CD8-positive, alpha-beta T cell (primary cell): ENCODE measurements at regions of chr5 and their contacts with region 1.

Region 1: DNA sequence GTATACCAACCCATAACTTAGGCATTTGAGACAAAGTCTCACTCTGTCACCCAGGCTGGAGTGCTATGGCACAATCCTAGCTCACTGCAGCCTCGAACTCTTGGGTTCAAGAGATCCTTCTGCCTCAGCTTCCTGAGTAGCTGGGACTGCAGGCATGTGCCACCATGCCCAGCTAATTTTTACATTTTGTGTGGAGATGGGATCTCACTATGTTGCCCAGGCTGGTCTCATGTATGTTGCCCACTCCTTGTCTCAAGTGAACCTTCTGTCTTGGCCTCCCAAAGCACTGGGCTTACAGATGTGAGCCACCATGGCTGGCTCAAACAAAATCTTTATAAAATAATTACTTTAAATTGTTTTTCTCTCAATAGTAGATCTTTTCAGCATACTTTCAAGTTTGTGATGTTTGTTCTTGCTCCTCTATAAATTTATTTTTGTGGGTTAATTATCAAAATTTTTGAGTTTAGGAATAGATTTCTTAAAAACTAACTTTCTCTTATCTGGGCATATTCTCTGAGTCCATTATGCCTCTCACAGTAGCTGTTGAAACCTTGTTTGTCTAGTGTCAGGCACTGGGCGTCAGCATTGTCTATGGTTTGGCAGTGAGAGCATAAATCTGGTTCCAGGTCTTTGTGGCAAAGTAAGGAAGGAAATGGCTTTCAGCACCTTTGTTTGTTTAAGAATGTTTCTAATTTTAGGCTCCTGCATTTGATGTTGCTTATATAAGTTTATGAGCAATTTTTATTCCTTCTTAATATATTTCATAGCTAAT is 38.7 kb downstream of the NLN start:
- DNase-seq: peak; percentile 27 to 83 (median 58)
- ATAC-seq: peak; percentile 99
- H3K4me3 ChIP-seq: no peak overlapping the region
- H3K4me3 Mint-ChIP-seq: no peak overlapping the region
- H3K27ac ChIP-seq: no peak overlapping the region
- H3K27ac Mint-ChIP-seq: no peak overlapping the region
- H3K4me1 ChIP-seq: peaks cover 8% of the 10 kb centered on the region
- H3K4me1 Mint-ChIP-seq: peaks cover 3% of the 10 kb centered on the region
- H3K27me3 ChIP-seq: no peaks in the 10 kb centered on the region
- H3K27me3 Mint-ChIP-seq: no peaks in the 10 kb centered on the region
- CTCF ChIP-seq: peak; percentile 74

Region 2: DNA sequence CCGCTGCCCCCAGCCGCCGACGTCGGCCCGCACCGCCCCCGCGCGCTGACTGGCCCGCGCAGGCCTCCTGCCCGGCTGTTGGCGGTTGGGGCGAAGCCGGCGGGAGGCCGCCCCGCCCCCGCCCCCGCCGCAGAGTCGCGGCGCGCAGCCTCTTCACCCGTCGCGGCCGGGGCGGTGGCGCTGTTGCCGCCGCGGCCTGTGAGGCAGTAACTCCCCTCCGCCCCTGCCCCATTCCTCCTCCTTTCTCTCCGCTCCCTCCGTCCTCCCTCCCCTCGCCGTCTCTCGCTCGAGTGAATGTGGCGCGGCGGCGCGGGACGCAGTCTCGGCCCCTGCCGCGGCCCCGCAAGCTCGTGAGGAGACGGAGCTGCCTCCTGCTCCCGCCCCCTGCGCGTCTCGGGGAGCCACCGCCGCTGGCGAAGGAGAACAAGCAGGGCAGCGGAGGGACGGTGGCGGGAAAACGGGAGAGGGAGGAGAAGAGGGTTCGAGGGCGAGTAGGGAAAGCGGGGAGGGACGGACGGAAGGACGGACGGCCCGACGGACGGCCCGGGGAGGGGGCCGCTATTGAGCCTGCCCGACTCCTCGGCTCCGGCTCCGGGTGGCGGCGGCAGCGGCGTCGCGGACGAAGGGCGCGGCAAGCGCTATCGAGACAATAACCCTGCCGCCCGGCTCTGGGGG is 165.0 kb after region 1 on chr5:
- CTCF ChIA-PET with region 1: interaction called, 5 read pairs
- POLR2A ChIA-PET with region 1: no interaction called
- intact Hi-C with region 1: loop called in 1 of 2 experiments (anchors 1 kb)
- DNase-seq: peak in 8 of 9 experiments; percentile 57 to 94 (median 79)
- ATAC-seq: peak; percentile 67
- H3K4me3 ChIP-seq: peak overlapping the region; percentile 67 to 84
- H3K4me3 Mint-ChIP-seq: peak overlapping the region; percentile 91
- H3K27ac ChIP-seq: peak overlapping the region; percentile 84 to 93
- H3K27ac Mint-ChIP-seq: peak overlapping the region; percentile 95
- H3K4me1 ChIP-seq: peaks cover 26% of the 10 kb centered on the region
- H3K4me1 Mint-ChIP-seq: peaks cover 42% of the 10 kb centered on the region
- H3K27me3 ChIP-seq: no peaks in the 10 kb centered on the region
- H3K27me3 Mint-ChIP-seq: no peaks in the 10 kb centered on the region
- CTCF ChIP-seq: no peak

Region 3: GRCh38 chr5:66041627-66042026 is 280.9 kb after region 1 on chr5:
- CTCF ChIA-PET with region 1: interaction called, 5 read pairs
- POLR2A ChIA-PET with region 1: no interaction called
- intact Hi-C with region 1: loop called in 1 of 2 experiments (anchors 5 kb)
- DNase-seq: no peak
- ATAC-seq: no peak
- H3K4me3 ChIP-seq: no peak overlapping the region
- H3K4me3 Mint-ChIP-seq: no peak overlapping the region
- H3K27ac ChIP-seq: no peak overlapping the region
- H3K27ac Mint-ChIP-seq: no peak overlapping the region
- H3K4me1 ChIP-seq: no peaks in the 10 kb centered on the region
- H3K4me1 Mint-ChIP-seq: peaks cover 23% of the 10 kb centered on the region
- H3K27me3 ChIP-seq: no peaks in the 10 kb centered on the region
- H3K27me3 Mint-ChIP-seq: no peaks in the 10 kb centered on the region
- CTCF ChIP-seq: no peak

Region 4: DNA sequence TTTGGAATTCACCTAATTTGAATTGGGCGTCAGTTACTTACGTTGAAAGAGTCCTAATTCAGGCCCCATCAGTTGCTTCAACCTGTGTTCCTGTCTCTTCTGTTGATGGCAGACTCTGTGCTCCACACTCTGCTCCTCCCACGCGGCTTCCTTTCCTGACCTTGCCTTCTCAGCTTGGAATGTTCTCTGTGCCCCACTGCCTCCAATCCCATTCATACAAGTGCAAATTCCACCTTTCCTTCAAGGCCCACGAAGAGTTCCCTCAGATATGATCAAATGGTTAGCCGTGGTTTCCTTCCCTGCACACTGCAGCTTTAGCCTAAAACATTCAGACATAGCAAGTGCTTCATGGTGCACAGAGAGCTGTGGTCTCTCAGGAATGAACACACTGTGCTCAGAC is 449.1 kb after region 1 on chr5:
- CTCF ChIA-PET with region 1: no interaction called
- POLR2A ChIA-PET with region 1: no interaction called
- intact Hi-C with region 1: loop called in 1 of 2 experiments (anchors 5 kb)
- DNase-seq: no peak
- ATAC-seq: no peak
- H3K4me3 ChIP-seq: no peak overlapping the region
- H3K4me3 Mint-ChIP-seq: no peak overlapping the region
- H3K27ac ChIP-seq: no peak overlapping the region
- H3K27ac Mint-ChIP-seq: no peak overlapping the region
- H3K4me1 ChIP-seq: no peaks in the 10 kb centered on the region
- H3K4me1 Mint-ChIP-seq: no peaks in the 10 kb centered on the region
- H3K27me3 ChIP-seq: no peaks in the 10 kb centered on the region
- H3K27me3 Mint-ChIP-seq: no peaks in the 10 kb centered on the region
- CTCF ChIP-seq: no peak

Region 5: GRCh38 chr5:66757188-66757833 is 996.6 kb after region 1 on chr5:
- CTCF ChIA-PET with region 1: interaction called, 4 read pairs
- POLR2A ChIA-PET with region 1: no interaction called
- intact Hi-C with region 1: loop called (anchors 2 kb)
- DNase-seq: peak in 4 of 9 experiments; percentile 13 to 53 (median 31)
- ATAC-seq: no peak
- H3K4me3 ChIP-seq: no peak overlapping the region
- H3K4me3 Mint-ChIP-seq: no peak overlapping the region
- H3K27ac ChIP-seq: no peak overlapping the region
- H3K27ac Mint-ChIP-seq: no peak overlapping the region
- H3K4me1 ChIP-seq: no peaks in the 10 kb centered on the region
- H3K4me1 Mint-ChIP-seq: no peaks in the 10 kb centered on the region
- H3K27me3 ChIP-seq: no peaks in the 10 kb centered on the region
- H3K27me3 Mint-ChIP-seq: peaks cover 13% of the 10 kb centered on the region
- CTCF ChIP-seq: peak; percentile 36